Panc1 (cell line): ENCODE measurements at regions of chr9 and their contacts with region 1.

Region 1: GRCh38 chr9:94065535-94065961 is 18.7 kb upstream of the PTPDC1 start:
- DNase-seq: peak; percentile 54
- ATAC-seq: peak; percentile 84
- H3K4me3 ChIP-seq: no peak overlapping the region
- H3K27ac ChIP-seq: no peak overlapping the region
- H3K4me1 ChIP-seq: no peaks in the 10 kb centered on the region
- H3K27me3 ChIP-seq: no peaks in the 10 kb centered on the region
- CTCF ChIP-seq: peak; percentile 73

Region 2: GRCh38 chr9:93962561-93963440 is 102.7 kb before region 1 on chr9:
- CTCF ChIA-PET with region 1: no interaction called
- POLR2A ChIA-PET with region 1: no interaction called
- in situ Hi-C with region 1: no loop called
- intact Hi-C with region 1: no loop called
- DNase-seq: peak; percentile 46
- ATAC-seq: peak; percentile 90
- H3K4me3 ChIP-seq: no peak overlapping the region
- H3K27ac ChIP-seq: no peak overlapping the region
- H3K4me1 ChIP-seq: no peaks in the 10 kb centered on the region; the same call in none of the 2 replicates
- H3K27me3 ChIP-seq: no peaks in the 10 kb centered on the region
- CTCF ChIP-seq: peak; percentile 80

Region 3: GRCh38 chr9:94166237-94166963 is 100.9 kb after region 1 on chr9:
- CTCF ChIA-PET with region 1: no interaction called
- POLR2A ChIA-PET with region 1: no interaction called
- in situ Hi-C with region 1: no loop called
- intact Hi-C with region 1: loop called (anchors 10 kb)
- DNase-seq: peak; percentile 75
- ATAC-seq: peak; percentile 85
- H3K4me3 ChIP-seq: peak overlapping the region; percentile 90 to 92
- H3K27ac ChIP-seq: peak overlapping the region; percentile 51; the same call in 1 of the 2 replicates
- H3K4me1 ChIP-seq: peaks cover 14% of the 10 kb centered on the region
- H3K27me3 ChIP-seq: no peaks in the 10 kb centered on the region
- CTCF ChIP-seq: 0 out of 2 replicates have a peak, but pooled peaks have one; percentile 17

Region 4: DNA sequence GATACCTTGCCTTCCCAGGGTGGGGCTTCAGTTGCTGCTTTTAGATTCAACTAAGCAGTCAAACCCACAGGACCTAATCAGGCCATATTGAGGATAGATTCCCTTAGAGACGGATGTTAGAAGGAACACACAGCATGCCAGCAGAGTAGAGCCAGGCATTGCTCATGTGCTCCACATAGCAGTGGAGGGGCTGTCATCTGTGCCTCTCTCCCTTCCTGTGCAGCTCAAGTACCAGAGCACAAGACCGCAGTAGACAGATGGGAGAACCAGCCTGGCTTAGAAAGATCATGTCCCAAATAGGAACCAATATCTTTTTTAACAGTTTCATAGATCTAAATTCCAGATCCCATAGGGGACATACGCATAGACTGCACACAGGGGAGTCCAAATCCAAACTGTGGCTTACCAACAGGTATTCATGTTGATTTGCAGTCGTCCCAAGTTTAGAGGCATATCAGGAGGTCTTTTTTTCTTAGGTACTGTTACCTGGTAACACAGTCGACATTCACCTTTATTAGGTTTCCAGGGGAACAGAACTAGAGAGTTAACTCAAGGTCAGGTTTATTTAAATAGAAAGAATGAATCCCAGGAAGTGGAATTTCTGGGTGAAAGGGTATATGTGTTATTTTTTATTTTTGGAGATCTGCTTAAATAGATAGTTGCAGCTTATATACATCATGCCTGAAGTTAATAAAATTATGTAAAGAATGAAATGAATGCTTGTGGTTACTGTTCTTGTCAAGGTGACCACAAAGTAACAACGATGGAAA is 445.8 kb after region 1 on chr9:
- CTCF ChIA-PET with region 1: no interaction called
- POLR2A ChIA-PET with region 1: interaction called, 15 read pairs
- in situ Hi-C with region 1: no loop called
- intact Hi-C with region 1: no loop called
- DNase-seq: no peak
- ATAC-seq: no peak
- H3K4me3 ChIP-seq: no peak overlapping the region
- H3K27ac ChIP-seq: no peak overlapping the region
- H3K4me1 ChIP-seq: no peaks in the 10 kb centered on the region
- H3K27me3 ChIP-seq: no peaks in the 10 kb centered on the region
- CTCF ChIP-seq: no peak